MCF 10A (cell line): ENCODE measurements at regions of chr11 and their contacts with region 1.

Region 1: GRCh38 chr11:124800226-124800929 is at the start of gene MSANTD2:
- DNase-seq: peak; percentile 60
- H3K4me3 Mint-ChIP-seq: peak within 1 kb of the TSS; percentile 83
- H3K27ac Mint-ChIP-seq: peak within 1 kb of the TSS; percentile 84
- H3K4me1 Mint-ChIP-seq: peaks cover 11% of the 10 kb centered on the region
- H3K27me3 Mint-ChIP-seq: no peaks in the 10 kb centered on the region
- CTCF ChIP-seq: no peak
- total RNA-seq, gene MSANTD2: 14.2 and 15.3 TPM in 2 replicates

Region 2: GRCh38 chr11:124622531-124623451 is 177.6 kb before region 1 on chr11 and contains the start of gene TBRG1:
- CTCF ChIA-PET with region 1: interaction called, 4 read pairs
- POLR2A ChIA-PET with region 1: interaction called, 19 read pairs
- intact Hi-C with region 1: no loop called
- DNase-seq: peak; percentile 87
- H3K4me3 Mint-ChIP-seq: peak within 1 kb of the TSS; percentile 95
- H3K27ac Mint-ChIP-seq: peak within 1 kb of the TSS; percentile 99
- H3K4me1 Mint-ChIP-seq: peaks cover 17% of the 10 kb centered on the region
- H3K27me3 Mint-ChIP-seq: peaks cover 16% of the 10 kb centered on the region
- CTCF ChIP-seq: no peak
- total RNA-seq, gene TBRG1: 46.9 and 54.0 TPM in 2 replicates

Region 3: DNA sequence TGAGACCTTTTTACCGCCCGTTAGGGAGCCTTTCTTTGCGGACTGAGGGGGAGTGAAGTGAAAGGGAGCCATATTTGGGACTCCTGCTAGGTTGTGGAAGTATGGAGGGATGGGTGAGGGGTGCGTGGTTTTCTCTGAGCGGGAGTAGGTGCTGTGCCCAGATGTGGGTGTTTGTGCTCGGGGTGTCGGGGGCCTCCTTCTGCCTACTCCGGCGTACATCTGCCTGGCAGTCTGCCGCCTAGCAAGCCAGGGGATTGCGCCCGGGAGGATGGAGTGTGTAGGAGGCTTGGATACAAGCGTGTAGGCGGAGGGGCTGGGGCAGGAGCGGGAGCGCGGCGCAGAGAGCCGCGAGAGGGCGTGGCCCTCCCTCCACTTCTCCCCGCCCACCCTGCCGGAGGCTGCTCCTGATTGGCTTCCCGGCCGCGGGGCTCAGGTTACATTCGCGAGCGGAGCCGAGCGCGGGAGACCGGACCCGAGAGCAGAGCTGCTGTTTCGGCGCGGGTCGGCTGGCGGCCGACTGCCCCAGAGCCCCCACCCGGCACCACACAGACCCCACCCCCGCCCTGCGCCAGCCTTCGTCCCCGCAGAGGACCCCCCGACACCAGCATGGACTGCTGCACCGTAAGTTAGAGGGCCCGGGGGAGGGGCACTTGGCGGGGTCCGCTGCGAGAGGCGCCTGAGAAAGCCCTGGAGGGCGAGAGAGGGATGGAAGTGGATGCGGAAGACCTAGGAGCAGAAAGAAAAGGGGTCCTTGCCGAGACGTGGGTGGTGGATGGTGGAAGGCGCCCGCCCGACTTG is 60.7 kb before region 1 on chr11 and contains the start of gene NRGN:
- CTCF ChIA-PET with region 1: no interaction called
- POLR2A ChIA-PET with region 1: interaction called, 5 read pairs
- intact Hi-C with region 1: loop called (anchors 10 kb)
- DNase-seq: peak; percentile 93
- H3K4me3 Mint-ChIP-seq: peak within 1 kb of the TSS; percentile 64
- H3K27ac Mint-ChIP-seq: no peak within 1 kb of the TSS
- H3K4me1 Mint-ChIP-seq: no peaks in the 10 kb centered on the region
- H3K27me3 Mint-ChIP-seq: peaks cover 11% of the 10 kb centered on the region
- CTCF ChIP-seq: no peak
- total RNA-seq, gene NRGN: 1.4 TPM in 1 of 2 replicates, not detected in the other

Region 4: GRCh38 chr11:124812876-124813275 is 12.5 kb after region 1 on chr11:
- CTCF ChIA-PET with region 1: interaction called, 15 read pairs
- POLR2A ChIA-PET with region 1: interaction called, 8 read pairs
- intact Hi-C with region 1: no loop called
- DNase-seq: no peak
- H3K4me3 Mint-ChIP-seq: no peak overlapping the region
- H3K27ac Mint-ChIP-seq: no peak overlapping the region
- H3K4me1 Mint-ChIP-seq: peaks cover 5% of the 10 kb centered on the region
- H3K27me3 Mint-ChIP-seq: peaks cover 33% of the 10 kb centered on the region
- CTCF ChIP-seq: no peak

Region 5: DNA sequence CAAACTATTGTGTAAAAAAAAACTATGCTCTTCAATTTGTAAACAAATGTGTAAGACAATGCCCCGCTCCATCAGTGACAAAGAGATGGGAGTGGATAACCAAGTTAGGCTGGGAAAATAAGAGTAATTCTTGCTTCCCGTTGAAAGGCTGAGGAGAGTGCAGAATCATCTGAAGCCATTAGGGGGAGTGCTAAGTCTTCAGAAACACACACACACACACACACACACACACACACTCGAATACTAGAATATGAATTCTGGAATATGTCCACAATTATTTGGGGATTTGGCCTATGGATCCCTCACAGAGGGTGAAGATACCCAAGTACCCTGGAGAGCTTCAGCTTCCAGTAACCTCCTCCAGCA is 37.1 kb after region 1 on chr11:
- CTCF ChIA-PET with region 1: interaction called, 201 read pairs
- POLR2A ChIA-PET with region 1: interaction called, 19 read pairs
- intact Hi-C with region 1: loop called (anchors 1 kb)
- DNase-seq: peak; percentile 80
- H3K4me3 Mint-ChIP-seq: no peak overlapping the region
- H3K27ac Mint-ChIP-seq: no peak overlapping the region
- H3K4me1 Mint-ChIP-seq: peaks cover 4% of the 10 kb centered on the region
- H3K27me3 Mint-ChIP-seq: peaks cover 27% of the 10 kb centered on the region
- CTCF ChIP-seq: peak; percentile 26

Region 6: DNA sequence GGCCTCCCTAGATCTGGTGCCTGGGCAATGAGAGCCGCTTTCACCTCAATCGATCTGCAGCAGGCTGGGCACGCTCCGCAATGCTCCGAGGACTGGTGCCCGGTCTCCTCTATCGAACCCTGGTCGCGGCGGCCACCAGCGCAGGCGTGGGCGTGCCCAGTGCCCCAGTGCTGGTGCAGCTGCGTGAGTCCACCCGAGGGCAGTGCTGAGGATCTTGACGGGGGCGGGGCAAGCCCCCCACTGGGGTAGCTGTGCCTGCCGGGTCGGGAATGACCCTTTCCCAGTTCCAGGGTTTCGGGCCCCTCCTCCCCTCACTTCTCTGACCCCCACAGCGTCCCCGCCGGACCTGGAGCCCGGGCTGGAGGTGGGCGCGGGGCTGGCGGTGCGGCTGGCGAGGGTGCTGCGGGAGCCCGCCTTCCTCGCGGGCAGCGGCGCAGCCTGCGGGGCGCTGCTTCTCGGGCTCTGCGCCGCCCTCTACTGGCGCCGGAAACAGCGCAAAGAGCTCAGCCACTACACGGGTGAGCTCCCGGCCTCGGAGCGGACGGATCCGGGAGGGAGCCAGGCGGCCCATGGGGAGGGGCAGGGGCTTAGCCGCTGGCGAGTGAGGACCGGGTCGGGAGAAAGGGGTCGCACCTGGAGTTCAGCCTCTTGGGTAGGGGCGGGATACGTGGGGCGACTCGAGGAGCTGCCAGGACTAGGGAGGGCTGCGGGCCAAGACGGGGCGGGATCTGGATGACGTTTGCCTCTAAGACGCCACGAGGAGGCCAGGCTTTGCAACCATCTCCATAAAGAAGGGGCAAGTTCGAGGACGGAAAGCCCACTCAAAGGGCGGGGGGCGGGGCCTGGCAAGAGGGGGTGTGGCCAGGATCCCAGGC is 75.8 kb after region 1 on chr11:
- CTCF ChIA-PET with region 1: interaction called, 6 read pairs
- POLR2A ChIA-PET with region 1: interaction called, 12 read pairs
- intact Hi-C with region 1: no loop called
- DNase-seq: peak; percentile 95
- H3K4me3 Mint-ChIP-seq: peak overlapping the region; percentile 96
- H3K27ac Mint-ChIP-seq: peak overlapping the region; percentile 95
- H3K4me1 Mint-ChIP-seq: peaks cover 23% of the 10 kb centered on the region
- H3K27me3 Mint-ChIP-seq: peaks cover 20% of the 10 kb centered on the region
- CTCF ChIP-seq: peak; percentile 45

Region 7: DNA sequence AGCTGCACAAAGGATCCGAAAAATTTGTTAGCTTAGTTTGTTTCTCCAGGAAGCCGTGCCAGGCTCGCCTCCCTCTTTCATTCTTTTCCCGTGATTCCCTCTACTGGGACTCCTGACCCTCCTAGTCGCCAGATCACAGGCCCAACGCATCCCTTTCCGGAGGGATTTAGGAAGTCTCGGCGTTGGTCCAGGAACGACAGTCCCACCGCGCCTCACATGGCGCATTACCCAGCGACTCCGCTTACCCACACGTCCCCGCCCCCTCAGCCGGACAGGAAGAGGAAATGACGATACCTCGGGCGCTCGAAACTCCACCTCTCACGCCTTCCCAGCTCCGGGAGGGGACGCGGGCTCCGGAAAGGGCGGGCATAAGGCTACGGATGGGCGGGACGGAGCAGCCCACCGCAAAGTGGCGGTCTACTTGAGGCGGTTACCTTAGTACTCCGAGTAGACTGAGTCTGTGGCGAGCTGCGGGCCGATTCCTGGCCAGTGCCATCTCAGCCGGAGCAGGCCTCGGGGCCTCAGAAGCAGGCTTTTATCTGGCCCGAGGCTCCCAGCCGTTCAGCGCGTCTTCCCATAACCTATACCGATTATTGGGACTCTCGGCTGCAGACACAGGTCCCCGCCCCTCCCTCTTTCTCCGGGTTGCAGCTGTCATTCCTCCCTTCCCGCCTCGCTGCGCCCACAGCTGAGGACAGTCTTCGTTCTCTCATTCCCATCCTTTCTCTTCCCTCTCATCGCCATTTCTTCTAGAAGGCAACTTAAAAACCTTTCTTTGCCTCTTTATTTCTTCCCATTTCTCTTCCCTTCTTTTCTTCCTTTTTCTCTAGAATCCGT is 153.6 kb after region 1 on chr11 and contains the start of gene CCDC15:
- CTCF ChIA-PET with region 1: no interaction called
- POLR2A ChIA-PET with region 1: interaction called, 13 read pairs
- intact Hi-C with region 1: no loop called
- DNase-seq: peak; percentile 98
- H3K4me3 Mint-ChIP-seq: no peak within 1 kb of the TSS
- H3K27ac Mint-ChIP-seq: no peak within 1 kb of the TSS
- H3K4me1 Mint-ChIP-seq: peaks cover 9% of the 10 kb centered on the region
- H3K27me3 Mint-ChIP-seq: no peaks in the 10 kb centered on the region
- CTCF ChIP-seq: no peak
- total RNA-seq, gene CCDC15: 2.8 and 3.4 TPM in 2 replicates